GM12878 (cell line): ENCODE measurements at regions of chr1 and their contacts with region 1.

Region 1: DNA sequence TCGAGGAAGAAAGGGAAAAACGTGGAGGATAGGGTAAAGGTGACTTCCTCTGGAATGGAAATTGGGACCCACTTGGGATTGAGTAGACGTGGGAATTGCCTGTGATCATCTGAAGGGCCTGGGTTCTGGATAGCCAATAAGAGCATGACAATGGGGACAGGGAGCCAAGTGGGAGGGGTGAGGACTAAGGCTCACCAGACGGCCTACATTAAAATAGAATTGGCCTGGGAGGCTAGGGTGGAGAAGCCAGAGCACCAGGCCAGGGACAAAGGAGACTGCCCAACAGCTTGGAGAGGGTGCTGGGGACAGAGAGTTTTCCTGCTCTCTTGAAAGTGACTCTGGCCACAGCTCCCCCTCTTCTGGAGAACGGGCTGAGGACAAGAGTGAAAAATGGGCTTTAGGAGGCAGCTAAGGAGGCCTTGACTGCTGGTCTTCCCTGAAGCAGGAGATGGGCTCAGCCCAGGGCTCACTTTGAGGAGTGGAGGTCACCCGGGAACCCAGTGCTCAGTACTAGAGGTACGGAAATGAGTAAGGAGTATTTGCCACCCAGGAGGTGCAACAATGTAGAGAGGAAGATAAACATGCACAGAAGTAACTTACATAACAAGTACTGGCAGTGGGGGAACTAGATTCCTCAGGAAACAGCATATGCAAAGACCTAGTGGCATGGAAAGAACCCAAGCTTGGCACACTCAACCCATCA is 18.8 kb downstream of the INKA2 start:
- DNase-seq: no peak
- ATAC-seq: no peak
- H3K4me3 ChIP-seq: no peak overlapping the region
- H3K27ac ChIP-seq: no peak overlapping the region
- H3K4me1 ChIP-seq: no peaks in the 10 kb centered on the region
- H3K27me3 ChIP-seq: no peaks in the 10 kb centered on the region
- CTCF ChIP-seq: no peak
- EP300 ChIP-seq: no peak
- POLR2A ChIP-seq: no peak
- RAD21 ChIP-seq: no peak

Region 2: DNA sequence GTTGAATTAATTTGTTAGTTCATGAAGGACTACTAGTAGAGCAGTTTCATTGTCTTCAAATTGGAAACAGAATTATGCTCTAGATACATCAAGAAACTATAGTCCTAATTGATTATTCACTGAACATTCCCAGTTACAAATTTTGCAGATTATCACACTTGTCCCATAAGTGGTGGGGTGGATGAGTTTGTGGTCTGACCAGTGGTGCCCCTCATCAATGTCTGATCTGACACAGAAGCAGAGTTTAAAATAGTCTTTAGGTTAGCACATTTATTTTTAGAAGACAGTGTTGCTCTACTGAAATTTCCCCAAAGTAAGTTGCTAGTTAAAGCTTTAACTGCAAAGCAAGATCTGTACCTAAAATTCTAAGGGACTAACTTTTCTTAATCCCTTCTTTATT is 24.1 kb before region 1 on chr1:
- CTCF ChIA-PET with region 1: interaction called, 101 read pairs
- POLR2A ChIA-PET with region 1: interaction called, 6 read pairs
- RAD21 ChIA-PET with region 1: no interaction called
- SMC1A ChIA-PET with region 1: interaction called, 90 read pairs
- in situ Hi-C with region 1: no loop called
- intact Hi-C with region 1: no loop called
- DNase-seq: peak; percentile 20
- ATAC-seq: peak; percentile 70
- H3K4me3 ChIP-seq: peak overlapping the region; percentile 28; the same call in 1 of the 2 replicates
- H3K27ac ChIP-seq: peak overlapping the region; percentile 35; the same call in 1 of the 2 replicates
- H3K4me1 ChIP-seq: peaks cover 25% of the 10 kb centered on the region
- H3K27me3 ChIP-seq: no peaks in the 10 kb centered on the region
- CTCF ChIP-seq: no peak
- EP300 ChIP-seq: peak; percentile 38 to 64; a peak in 1 of 4 replicates
- POLR2A ChIP-seq: no peak
- RAD21 ChIP-seq: no peak

Region 3: GRCh38 chr1:111704776-111705175 is 15.6 kb before region 1 on chr1:
- CTCF ChIA-PET with region 1: interaction called, 101 read pairs
- POLR2A ChIA-PET with region 1: interaction called, 6 read pairs
- RAD21 ChIA-PET with region 1: no interaction called
- SMC1A ChIA-PET with region 1: interaction called, 90 read pairs
- in situ Hi-C with region 1: no loop called
- intact Hi-C with region 1: no loop called
- DNase-seq: no peak
- ATAC-seq: no peak
- H3K4me3 ChIP-seq: no peak overlapping the region
- H3K27ac ChIP-seq: no peak overlapping the region
- H3K4me1 ChIP-seq: peaks cover 7% of the 10 kb centered on the region
- H3K27me3 ChIP-seq: no peaks in the 10 kb centered on the region
- CTCF ChIP-seq: no peak
- EP300 ChIP-seq: no peak
- POLR2A ChIP-seq: no peak
- RAD21 ChIP-seq: no peak

Region 4: DNA sequence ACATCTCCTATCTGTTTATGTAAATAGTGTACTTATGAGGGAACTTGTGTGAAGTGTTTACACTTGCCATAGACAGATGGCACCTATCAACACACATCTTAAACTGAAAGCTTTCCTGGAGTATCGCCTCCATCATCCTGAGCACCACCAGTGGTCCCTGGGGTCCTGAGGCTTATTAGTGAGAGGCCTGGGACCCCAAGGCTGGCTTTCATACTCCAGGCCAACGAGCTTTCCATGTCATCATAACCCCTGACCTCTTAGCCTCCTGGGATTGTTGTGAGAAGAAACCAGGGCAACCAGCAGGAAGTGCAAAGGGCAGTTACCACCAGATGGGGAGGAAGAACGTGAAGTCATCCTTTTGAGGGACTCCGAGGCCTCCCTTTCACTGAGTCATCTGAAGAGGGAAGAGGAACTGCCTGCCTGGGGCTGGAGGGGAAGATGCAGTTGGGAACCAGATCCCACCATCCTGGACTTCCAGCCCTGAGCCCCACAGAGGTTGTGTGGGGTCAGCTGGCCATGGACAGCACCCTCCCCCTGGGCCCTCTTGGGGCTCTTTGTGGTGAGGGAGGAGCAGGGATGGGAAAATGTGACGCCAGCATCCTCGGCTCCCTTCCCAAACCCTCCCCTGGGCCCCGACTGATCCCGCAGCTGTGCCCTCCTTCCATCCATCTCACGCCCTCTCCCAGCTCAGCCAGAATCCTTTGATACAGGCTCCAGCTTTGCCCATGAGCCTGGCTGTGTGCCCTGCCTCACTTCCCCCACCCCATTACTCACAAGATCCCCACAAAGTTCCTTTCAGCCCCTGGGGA is 13.0 kb after region 1 on chr1:
- CTCF ChIA-PET with region 1: interaction called, 135 read pairs
- POLR2A ChIA-PET with region 1: interaction called, 3 read pairs
- RAD21 ChIA-PET with region 1: interaction called, 3 read pairs
- SMC1A ChIA-PET with region 1: interaction called, 12 read pairs
- in situ Hi-C with region 1: no loop called
- intact Hi-C with region 1: no loop called
- DNase-seq: no peak
- ATAC-seq: no peak
- H3K4me3 ChIP-seq: no peak overlapping the region
- H3K27ac ChIP-seq: no peak overlapping the region
- H3K4me1 ChIP-seq: peaks cover 6% of the 10 kb centered on the region; the same call in 1 of the 2 replicates
- H3K27me3 ChIP-seq: peaks cover 0 to 2% of the 10 kb centered on the region in 2 experiments; a peak in 2 of 4 replicates
- CTCF ChIP-seq: no peak
- EP300 ChIP-seq: no peak
- POLR2A ChIP-seq: no peak
- RAD21 ChIP-seq: no peak

Region 5: DNA sequence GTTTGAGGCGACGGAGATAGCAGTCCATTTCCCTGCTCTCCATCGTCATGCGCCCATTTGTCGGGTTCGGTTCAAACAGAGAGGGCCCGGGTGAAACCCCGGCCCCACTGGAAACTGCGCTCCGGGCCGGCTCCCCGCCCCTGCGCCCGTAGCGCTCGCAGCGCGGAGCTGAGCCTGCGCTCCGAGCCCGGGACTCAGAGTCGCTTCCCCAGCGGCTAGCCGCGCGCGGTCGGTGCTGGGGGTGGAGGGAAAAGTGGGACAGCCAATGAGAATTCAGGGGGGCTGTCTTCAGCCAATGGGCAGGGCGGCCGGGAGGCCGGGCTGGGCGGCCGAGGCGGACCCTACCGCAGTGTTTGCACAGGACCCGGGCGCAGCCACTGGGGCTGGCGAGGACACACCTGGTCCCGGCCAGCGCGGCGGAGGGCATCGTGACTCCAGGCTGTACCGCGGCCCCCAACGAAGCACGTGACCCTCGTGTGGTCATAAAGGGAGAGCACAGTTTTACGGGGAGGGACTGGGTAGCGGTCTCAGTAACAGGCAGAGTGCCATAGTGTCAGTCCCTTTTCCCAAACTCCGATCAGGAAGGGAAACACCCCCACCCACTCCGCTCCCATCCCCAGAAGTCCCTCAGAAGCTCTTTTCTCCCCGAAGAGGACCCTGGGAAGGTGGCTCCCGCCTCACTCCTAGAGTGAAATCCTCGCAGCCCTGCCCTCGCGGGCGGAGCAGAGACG is 18.9 kb after region 1 on chr1 and contains the start of gene INKA2:
- CTCF ChIA-PET with region 1: interaction called, 135 read pairs
- POLR2A ChIA-PET with region 1: interaction called, 3 read pairs
- RAD21 ChIA-PET with region 1: no interaction called
- SMC1A ChIA-PET with region 1: interaction called, 56 read pairs
- in situ Hi-C with region 1: no loop called
- intact Hi-C with region 1: no loop called
- DNase-seq: peak; percentile 47
- ATAC-seq: peak; percentile 90
- H3K4me3 ChIP-seq: peak within 1 kb of the TSS; percentile 86
- H3K27ac ChIP-seq: peak within 1 kb of the TSS; percentile 45
- H3K4me1 ChIP-seq: peaks cover 11% of the 10 kb centered on the region
- H3K27me3 ChIP-seq: peaks cover 0 to 8% of the 10 kb centered on the region in 2 experiments; a peak in 2 of 4 replicates
- CTCF ChIP-seq: peak in 1 of 3 experiments; percentile 11; a peak in 1 of 6 replicates
- EP300 ChIP-seq: no peak
- POLR2A ChIP-seq: peak; percentile 41; the same call in 1 of the 2 replicates
- RAD21 ChIP-seq: no peak
- polyA plus RNA-seq, gene INKA2: 0.38 TPM in 1 of 2 experiments, not detected in the other

Region 6: DNA sequence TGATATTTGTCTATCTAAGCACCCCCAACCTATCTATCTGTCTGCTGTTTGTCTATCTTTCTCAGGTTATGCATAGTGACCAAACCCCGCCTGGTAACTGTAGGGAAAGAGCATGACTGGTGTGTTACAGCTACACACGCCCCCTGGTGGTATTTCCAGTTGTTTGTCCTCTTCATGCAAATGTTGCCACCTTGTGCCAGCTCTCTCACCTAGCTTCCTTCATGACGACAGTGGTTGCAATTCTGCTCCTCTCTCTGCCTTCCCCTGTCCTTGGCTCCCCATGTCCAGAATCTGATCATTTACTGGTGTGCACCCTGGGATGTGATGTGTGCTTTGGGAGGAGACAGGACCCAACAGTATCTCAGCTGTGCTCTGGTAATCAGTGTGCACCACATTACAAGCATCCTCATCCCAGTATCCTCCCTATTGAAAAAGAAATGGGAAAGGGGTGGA is 26.9 kb after region 1 on chr1:
- CTCF ChIA-PET with region 1: interaction called, 135 read pairs
- POLR2A ChIA-PET with region 1: interaction called, 3 read pairs
- RAD21 ChIA-PET with region 1: interaction called, 17 read pairs
- SMC1A ChIA-PET with region 1: interaction called, 56 read pairs
- in situ Hi-C with region 1: no loop called
- intact Hi-C with region 1: loop called (anchors 2 kb)
- DNase-seq: no peak
- ATAC-seq: peak; percentile 94
- H3K4me3 ChIP-seq: no peak overlapping the region
- H3K27ac ChIP-seq: no peak overlapping the region
- H3K4me1 ChIP-seq: no peaks in the 10 kb centered on the region; the same call in 1 of the 2 replicates
- H3K27me3 ChIP-seq: peaks cover 0 to 1% of the 10 kb centered on the region in 2 experiments; a peak in 1 of 4 replicates
- CTCF ChIP-seq: peak; percentile 63 to 88 (median 65)
- EP300 ChIP-seq: no peak
- POLR2A ChIP-seq: no peak
- RAD21 ChIP-seq: peak; percentile 62

Region 7: DNA sequence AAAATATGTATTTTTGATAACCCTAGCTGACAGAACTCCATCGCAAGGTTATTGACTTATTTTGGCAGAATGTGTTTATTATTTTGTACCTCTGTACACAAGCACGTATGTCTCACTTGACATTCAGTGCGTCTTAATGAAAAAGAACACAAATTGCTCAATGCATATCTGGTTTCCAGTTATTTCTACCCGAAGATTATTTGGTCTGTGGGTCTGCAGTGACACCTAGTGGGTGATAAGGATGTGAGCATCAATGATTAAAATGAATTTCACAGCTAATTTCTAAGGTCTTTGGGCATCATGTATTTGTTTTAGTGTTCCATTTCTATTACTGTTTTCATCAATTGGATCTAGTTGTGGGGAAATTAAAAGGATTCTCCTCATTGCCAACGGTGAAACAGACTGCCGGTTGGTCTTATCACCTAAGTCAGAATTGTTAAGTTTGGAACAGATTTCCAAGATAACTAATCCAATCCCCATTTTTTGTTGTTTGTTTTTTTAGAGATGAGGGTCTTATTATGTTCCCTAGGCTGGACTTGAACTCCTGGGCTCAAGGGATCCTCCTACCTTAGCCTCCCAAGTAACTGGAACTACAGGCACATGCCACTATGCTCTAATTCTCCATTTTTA is 49.2 kb after region 1 on chr1:
- CTCF ChIA-PET with region 1: interaction called, 75 read pairs
- POLR2A ChIA-PET with region 1: no interaction called
- RAD21 ChIA-PET with region 1: interaction called, 31 read pairs
- SMC1A ChIA-PET with region 1: interaction called, 29 read pairs
- in situ Hi-C with region 1: no loop called
- intact Hi-C with region 1: loop called (anchors 1 kb)
- DNase-seq: peak; percentile 44
- ATAC-seq: peak; percentile 79
- H3K4me3 ChIP-seq: no peak overlapping the region
- H3K27ac ChIP-seq: no peak overlapping the region
- H3K4me1 ChIP-seq: no peaks in the 10 kb centered on the region
- H3K27me3 ChIP-seq: no peaks in the 10 kb centered on the region
- CTCF ChIP-seq: peak; percentile 66 to 87 (median 78)
- EP300 ChIP-seq: no peak
- POLR2A ChIP-seq: no peak
- RAD21 ChIP-seq: peak; percentile 92

Region 8: DNA sequence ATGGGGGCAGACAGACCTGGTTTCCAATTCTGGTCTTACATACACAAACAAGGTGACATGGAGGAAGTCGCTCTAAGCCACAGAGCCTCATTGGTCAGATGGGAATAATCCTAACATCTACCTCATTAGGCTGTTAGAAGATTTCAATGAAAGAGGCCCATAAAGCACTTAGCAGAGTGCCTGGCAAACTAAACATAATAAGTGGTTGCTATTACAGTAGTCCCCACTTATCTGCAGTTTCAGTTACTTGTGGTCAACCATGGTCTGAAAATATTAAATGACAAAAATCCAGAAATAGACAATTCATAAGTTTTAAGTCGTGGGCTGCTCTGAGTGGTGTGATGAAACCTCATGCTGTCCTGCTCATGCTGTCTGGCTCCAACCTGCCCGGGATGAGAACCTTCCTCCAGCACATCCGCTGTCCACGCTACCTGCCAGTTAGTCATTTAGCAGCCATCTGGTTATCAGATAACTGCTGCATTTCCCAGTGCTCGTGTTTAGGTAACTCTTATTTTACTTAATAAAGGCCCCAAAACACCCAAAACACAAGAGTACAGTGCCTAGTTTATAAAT is 147.5 kb after region 1 on chr1:
- CTCF ChIA-PET with region 1: no interaction called
- POLR2A ChIA-PET with region 1: no interaction called
- RAD21 ChIA-PET with region 1: no interaction called
- SMC1A ChIA-PET with region 1: no interaction called
- in situ Hi-C with region 1: no loop called
- intact Hi-C with region 1: no loop called
- DNase-seq: no peak
- ATAC-seq: no peak
- H3K4me3 ChIP-seq: no peak overlapping the region
- H3K27ac ChIP-seq: no peak overlapping the region
- H3K4me1 ChIP-seq: no peaks in the 10 kb centered on the region
- H3K27me3 ChIP-seq: peaks cover 0 to 2% of the 10 kb centered on the region in 2 experiments; a peak in 2 of 4 replicates
- CTCF ChIP-seq: no peak
- EP300 ChIP-seq: no peak
- POLR2A ChIP-seq: no peak
- RAD21 ChIP-seq: no peak

Region 9: GRCh38 chr1:111967064-111967690 is 246.8 kb after region 1 on chr1:
- CTCF ChIA-PET with region 1: no interaction called
- POLR2A ChIA-PET with region 1: no interaction called
- RAD21 ChIA-PET with region 1: no interaction called
- SMC1A ChIA-PET with region 1: no interaction called
- in situ Hi-C with region 1: no loop called
- intact Hi-C with region 1: no loop called
- DNase-seq: no peak
- ATAC-seq: no peak
- H3K4me3 ChIP-seq: no peak overlapping the region
- H3K27ac ChIP-seq: no peak overlapping the region
- H3K4me1 ChIP-seq: no peaks in the 10 kb centered on the region
- H3K27me3 ChIP-seq: no peaks in the 10 kb centered on the region; a peak in 3 of 4 replicates
- CTCF ChIP-seq: no peak
- EP300 ChIP-seq: no peak
- POLR2A ChIP-seq: no peak
- RAD21 ChIP-seq: no peak